CD4-positive, alpha-beta memory T cell (primary cell): ENCODE measurements at regions of chr19 and their contacts with region 1.

Region 1: DNA sequence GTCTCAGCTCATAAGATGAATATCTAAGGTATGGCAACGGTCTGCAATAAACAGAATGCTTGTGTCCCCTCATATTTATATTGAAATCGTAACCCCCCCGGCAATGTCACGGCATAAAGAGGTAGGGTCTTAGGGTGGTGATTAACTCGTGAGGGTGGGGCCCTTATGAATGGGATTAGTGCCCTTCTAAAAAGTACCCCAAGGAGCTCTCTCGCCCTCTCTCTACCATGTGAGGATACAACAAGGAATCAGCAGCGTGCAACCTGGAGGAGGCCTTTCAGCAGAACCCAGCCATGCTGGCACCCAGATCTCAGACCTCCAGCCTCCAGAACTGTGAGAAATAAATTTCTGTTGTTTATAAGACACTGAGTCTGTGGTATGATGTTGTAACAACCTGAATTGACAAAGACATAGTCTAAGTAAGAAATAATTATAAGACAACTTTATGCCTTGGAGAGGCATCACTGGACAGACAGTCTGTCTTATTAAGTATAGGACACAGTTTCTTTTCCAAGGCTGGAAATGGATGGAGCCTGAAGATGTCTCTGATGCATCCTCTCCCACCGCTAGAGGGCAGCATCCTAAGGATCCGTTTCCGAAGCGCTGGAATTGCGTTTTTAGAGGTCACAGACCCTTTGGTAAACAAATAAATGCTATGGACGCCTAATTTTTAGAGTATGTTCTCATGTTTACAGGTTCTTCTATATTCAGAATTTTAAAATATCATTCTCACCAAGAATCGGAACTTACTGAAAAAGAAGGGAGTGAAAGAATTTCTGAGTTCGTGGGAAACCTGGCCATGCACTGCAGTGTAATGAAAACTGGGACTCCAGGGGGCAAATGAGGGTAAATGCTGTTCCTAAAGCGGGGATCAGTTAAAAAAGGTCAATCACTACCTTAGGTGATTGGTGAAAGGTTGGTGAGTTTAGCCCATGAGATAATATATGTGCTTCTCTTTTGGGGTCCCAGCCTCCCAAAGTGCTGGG is 13.3 kb upstream of the LEUTX start:
- DNase-seq: peak in 3 of 5 donors; percentile 14 to 20 (median 16)
- H3K4me3 ChIP-seq: no peak overlapping the region
- H3K4me3 Mint-ChIP-seq: no peak overlapping the region
- H3K27ac ChIP-seq: no peak overlapping the region
- H3K27ac Mint-ChIP-seq: no peak overlapping the region
- H3K4me1 ChIP-seq: no peaks in the 10 kb centered on the region
- H3K4me1 Mint-ChIP-seq: peaks cover 0 to 1% (median 0%) of the 10 kb centered on the region in 4 donors
- H3K27me3 ChIP-seq: no peaks in the 10 kb centered on the region
- H3K27me3 Mint-ChIP-seq: peaks cover under 1 to 1% of the 10 kb centered on the region in 2 donors

Region 2: GRCh38 chr19:39546599-39546998 is 218.8 kb before region 1 on chr19:
- CTCF ChIA-PET with region 1: interaction called, 13 read pairs
- POLR2A ChIA-PET with region 1: no interaction called
- intact Hi-C with region 1: loop called (anchors 1 kb)
- DNase-seq: no peak
- H3K4me3 ChIP-seq: no peak overlapping the region
- H3K4me3 Mint-ChIP-seq: peak overlapping the region in 2 of 8 donors; percentile 30 to 32
- H3K27ac ChIP-seq: no peak overlapping the region
- H3K27ac Mint-ChIP-seq: peak overlapping the region in 4 of 7 donors; percentile 47 to 82 (median 62)
- H3K4me1 ChIP-seq: peaks cover 45% of the 10 kb centered on the region
- H3K4me1 Mint-ChIP-seq: peaks cover 25 to 50% (median 37%) of the 10 kb centered on the region in 4 donors
- H3K27me3 ChIP-seq: no peaks in the 10 kb centered on the region
- H3K27me3 Mint-ChIP-seq: peaks cover 0 to 2% of the 10 kb centered on the region in 2 donors